Head of caudate nucleus (tissue), 42 donors: ENCODE measurements at regions of chr18 and their contacts with region 1.

Region 1: DNA sequence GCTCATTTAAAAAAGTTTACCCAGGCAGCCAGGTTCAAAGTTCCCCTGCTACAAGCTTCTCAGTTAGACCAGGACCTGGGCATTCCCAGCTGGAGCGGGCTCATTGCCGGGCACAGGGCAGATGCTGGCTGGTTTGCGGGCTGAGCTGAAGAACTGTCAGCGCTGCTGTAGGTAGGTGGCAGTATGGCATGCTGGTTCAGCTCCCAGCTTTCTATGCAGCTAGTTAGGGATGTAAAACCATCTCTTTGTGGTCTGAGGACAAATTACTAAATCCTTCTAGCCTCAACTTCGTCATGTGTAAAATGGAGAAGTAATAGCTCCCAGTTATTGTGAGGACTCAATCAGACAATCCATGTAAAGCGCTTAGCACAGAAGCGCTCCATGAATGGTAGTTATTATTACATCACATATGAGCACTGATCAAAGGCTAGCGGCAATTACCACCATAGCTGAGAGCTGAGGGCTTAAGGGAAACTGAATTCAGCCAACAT is 2.4 kb upstream of the LDLRAD4 start:
- DNase-seq: peak; percentile 72 to 97 (median 89)

Region 2: GRCh38 chr18:12921178-12921577 is 295.0 kb before region 1 on chr18:
- intact Hi-C with region 1: no loop called
- DNase-seq: no peak

Region 3: DNA sequence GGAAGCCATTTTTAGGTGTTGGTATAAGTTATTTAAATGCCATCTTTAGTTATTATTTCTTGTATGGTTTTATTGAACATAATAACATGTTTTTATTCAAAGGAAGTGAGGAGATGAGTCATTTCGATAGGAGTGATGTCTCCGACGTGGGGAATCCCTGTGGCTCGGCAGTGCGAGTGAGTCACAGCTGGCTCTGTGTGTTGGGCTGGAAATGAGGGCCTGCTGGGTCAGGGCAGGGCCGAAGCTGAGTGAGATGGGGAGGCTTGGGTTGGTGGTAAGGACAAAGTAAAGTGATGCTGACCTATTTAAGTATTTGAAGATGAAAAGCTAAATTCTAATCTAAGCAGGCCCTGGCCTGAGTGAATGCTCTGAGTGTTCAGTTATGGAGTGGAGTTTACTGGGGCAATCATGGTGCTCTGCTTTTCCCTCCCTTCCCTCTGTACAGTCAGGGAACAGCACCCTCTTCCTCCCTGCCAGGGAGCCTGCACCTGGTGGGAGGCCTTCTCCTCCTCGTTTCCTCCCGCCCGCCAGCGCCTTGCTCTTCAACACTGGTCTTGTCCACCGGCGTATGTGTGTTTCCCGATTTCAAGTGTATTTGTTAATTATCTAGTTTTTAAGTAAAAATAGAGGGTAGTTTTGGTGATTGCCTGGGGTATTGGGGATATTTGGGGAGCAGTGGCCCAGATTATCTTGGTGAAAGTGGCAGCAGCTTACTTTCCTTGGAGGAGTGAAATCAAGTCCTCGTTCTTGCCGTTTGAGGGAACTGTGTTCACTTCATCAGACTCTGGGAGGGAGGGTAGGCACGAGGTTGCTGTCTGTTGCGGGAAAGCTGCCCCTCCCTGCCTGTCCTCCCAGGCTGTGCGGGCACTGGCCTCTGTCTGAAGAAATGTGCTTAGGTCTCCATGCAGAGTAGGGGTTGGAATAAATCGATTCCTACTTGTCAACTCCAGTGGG is 159.4 kb after region 1 on chr18:
- intact Hi-C with region 1: loop called (anchors 10 kb)
- DNase-seq: peak in 36 of 42 donors; percentile 47 to 90 (median 70)

Region 4: GRCh38 chr18:13530879-13531387 is 314.8 kb after region 1 on chr18:
- intact Hi-C with region 1: loop called (anchors 2 kb)
- DNase-seq: peak; percentile 51 to 87 (median 75)

Region 5: DNA sequence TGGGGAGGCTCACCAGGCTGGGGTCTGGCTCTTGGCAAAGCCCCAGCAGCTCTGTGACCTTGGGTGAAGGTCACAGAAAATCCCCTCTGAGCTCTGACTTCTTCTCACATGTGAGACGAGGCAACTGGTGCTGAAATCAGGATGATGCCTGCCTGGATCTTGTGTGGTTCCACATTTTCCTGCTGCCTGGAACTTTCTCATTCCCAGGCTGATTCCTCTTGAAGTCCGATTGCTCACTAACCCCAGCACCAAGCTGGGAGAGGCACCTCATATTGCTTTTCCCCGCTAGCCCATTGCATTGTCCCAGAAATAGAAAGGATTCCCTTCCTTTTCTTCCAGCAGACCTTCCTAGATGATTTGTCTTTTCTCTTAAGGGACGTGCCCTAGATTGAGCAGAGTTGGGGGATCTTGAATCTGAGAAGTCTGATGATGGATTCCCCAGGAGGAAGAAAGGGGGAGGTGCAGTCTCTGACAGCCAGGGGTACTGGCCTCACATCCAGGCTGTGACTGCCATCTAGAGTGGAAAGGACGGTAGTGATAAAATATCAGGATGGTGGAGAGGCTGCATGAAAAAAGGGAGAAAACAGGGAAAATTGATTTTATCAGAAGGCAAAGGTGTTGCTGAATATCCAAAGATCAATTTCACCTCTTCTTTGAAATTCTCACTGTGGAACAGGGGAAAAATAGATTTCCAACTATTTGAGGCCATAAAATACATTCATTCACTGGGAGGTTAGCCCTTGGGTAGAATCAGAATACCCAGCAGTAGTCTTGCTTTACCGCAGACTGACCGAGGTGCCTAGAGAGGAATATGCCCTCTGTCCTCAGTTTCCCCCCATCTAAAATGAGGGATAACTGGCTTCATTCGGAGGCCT is 413.9 kb after region 1 on chr18:
- intact Hi-C with region 1: loop called (anchors 10 kb)
- DNase-seq: peak in 35 of 42 donors; percentile 63 to 93 (median 82)

Region 6: GRCh38 chr18:13726232-13726971 is 510.3 kb after region 1 on chr18 and contains the starts of genes FAM210A and RNMT:
- intact Hi-C with region 1: loop called (anchors 10 kb)
- DNase-seq: peak; percentile 93 to 99 (median 97)